ENCODE measurements at regions of chr6 and their contacts with region 1.

Region 1: GRCh38 chr6:13272131-13273046 is 55.9 kb downstream of the TBC1D7 start:
- DNase-seq: peak; percentile 84
- H3K4me3 ChIP-seq: peak overlapping the region; percentile 71
- H3K27ac ChIP-seq: peak overlapping the region; percentile 65
- H3K4me1 ChIP-seq: peaks cover 68% of the 10 kb centered on the region
- CTCF ChIP-seq: peak; percentile 52; the same call in 1 of the 2 replicates

Region 2: DNA sequence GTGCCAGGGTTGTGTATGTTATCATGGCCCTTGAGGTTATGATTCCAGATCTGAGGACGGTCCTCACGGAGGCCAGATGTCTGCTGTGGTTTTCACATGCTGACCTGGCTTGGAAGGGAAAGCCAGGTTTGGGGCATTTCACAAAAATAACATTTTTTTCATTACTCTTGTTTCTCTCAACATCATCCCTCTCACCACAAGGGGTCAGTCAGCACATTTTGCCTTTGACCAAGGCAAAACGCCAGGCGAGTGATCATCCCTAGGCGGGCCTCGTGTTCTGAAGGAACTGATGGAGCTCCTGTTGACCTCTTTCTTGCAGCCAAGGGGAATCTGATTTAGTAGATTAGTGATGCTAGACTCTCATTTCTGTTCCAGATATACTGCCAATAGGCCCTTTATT is 77.5 kb before region 1 on chr6:
- CTCF ChIA-PET with region 1: interaction called, 3 read pairs
- POLR2A ChIA-PET with region 1: no interaction called
- intact Hi-C with region 1: loop called (anchors 1 kb)
- DNase-seq: peak; percentile 79
- H3K4me3 ChIP-seq: no peak overlapping the region
- H3K27ac ChIP-seq: no peak overlapping the region
- H3K4me1 ChIP-seq: no peaks in the 10 kb centered on the region
- CTCF ChIP-seq: peak; percentile 88

Region 3: GRCh38 chr6:13261464-13261994 is 10.9 kb before region 1 on chr6:
- CTCF ChIA-PET with region 1: no interaction called
- POLR2A ChIA-PET with region 1: interaction called, 13 read pairs
- intact Hi-C with region 1: loop called (anchors 2 kb)
- DNase-seq: peak; percentile 97
- H3K4me3 ChIP-seq: peak overlapping the region; percentile 59
- H3K27ac ChIP-seq: peak overlapping the region; percentile 94
- H3K4me1 ChIP-seq: peaks cover 63% of the 10 kb centered on the region
- CTCF ChIP-seq: no peak

Region 4: DNA sequence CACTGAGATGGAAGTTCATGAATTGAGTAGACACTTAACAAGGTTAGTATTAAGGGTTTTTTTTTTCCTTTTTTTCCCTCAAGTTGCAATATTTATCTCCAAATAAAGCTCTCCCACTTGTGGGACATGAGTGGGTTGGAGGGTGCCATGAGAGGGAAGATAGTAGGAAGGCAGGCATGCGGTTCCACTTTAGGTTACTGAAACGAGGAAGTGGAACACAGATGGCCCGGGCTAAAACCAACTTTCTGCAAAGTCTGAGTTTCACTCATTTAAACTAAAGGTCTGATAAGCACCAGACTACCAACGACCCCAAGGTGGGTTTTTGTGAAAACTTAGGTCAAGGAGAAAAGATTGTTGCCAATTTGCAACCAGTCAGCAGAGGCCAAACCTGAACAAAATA is 13.8 kb after region 1 on chr6:
- CTCF ChIA-PET with region 1: interaction called, 3 read pairs
- POLR2A ChIA-PET with region 1: interaction called, 24 read pairs
- intact Hi-C with region 1: no loop called
- DNase-seq: peak; percentile 68
- H3K4me3 ChIP-seq: peak overlapping the region; percentile 7
- H3K27ac ChIP-seq: peak overlapping the region; percentile 62
- H3K4me1 ChIP-seq: peaks cover 38% of the 10 kb centered on the region
- CTCF ChIP-seq: no peak

Region 5: DNA sequence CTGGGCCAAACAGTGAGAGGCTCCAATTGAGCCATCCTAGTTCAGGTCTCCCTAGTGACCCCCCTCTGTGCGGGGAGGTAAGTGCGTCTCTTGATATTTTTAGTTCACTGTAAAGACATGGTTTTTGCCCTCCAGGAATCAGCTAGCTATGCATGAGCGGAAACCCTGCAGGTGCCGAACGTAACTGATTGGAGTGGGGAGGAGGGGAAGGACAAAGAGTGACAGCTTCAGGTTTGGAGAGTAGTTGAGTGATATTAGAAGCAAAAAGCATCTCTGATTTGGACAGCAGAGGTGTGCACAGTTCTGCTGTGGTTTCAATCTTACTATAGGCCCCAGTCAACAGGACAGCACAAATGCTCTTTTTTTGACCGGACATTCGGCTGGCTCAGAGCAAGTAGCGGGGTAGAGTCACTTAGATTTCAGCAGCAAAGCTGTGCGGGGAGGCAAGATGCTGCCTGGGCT is 24.2 kb after region 1 on chr6:
- CTCF ChIA-PET with region 1: interaction called, 3 read pairs
- POLR2A ChIA-PET with region 1: interaction called, 11 read pairs
- intact Hi-C with region 1: loop called (anchors 1 kb)
- DNase-seq: peak; percentile 92
- H3K4me3 ChIP-seq: peak overlapping the region; percentile 33
- H3K27ac ChIP-seq: peak overlapping the region; percentile 71
- H3K4me1 ChIP-seq: peaks cover 69% of the 10 kb centered on the region
- CTCF ChIP-seq: peak; percentile 58

Region 6: GRCh38 chr6:13624871-13625288 is 352.5 kb after region 1 on chr6:
- CTCF ChIA-PET with region 1: no interaction called
- POLR2A ChIA-PET with region 1: no interaction called
- intact Hi-C with region 1: no loop called
- DNase-seq: peak; percentile 67
- H3K4me3 ChIP-seq: no peak overlapping the region
- H3K27ac ChIP-seq: no peak overlapping the region
- H3K4me1 ChIP-seq: peaks cover 5% of the 10 kb centered on the region
- CTCF ChIP-seq: peak; percentile 86

Measured in OCI-LY7 (cell line).